ENCODE measurements at regions of chr13 and their contacts with region 1.

Region 1: GRCh38 chr13:48126944-48127830 is 32.3 kb upstream of the MED4 start:
- DNase-seq: peak in 1 of 2 experiments; percentile 61
- H3K4me3 ChIP-seq: no peak overlapping the region
- H3K4me3 Mint-ChIP-seq: no peak overlapping the region
- H3K27ac Mint-ChIP-seq: no peak overlapping the region
- H3K4me1 ChIP-seq: peaks cover 6% of the 10 kb centered on the region; the same call in 1 of the 2 replicates
- H3K4me1 Mint-ChIP-seq: no peaks in the 10 kb centered on the region
- H3K27me3 ChIP-seq: no peaks in the 10 kb centered on the region
- H3K27me3 Mint-ChIP-seq: no peaks in the 10 kb centered on the region
- CTCF ChIP-seq: peak; percentile 56 to 67

Region 2: DNA sequence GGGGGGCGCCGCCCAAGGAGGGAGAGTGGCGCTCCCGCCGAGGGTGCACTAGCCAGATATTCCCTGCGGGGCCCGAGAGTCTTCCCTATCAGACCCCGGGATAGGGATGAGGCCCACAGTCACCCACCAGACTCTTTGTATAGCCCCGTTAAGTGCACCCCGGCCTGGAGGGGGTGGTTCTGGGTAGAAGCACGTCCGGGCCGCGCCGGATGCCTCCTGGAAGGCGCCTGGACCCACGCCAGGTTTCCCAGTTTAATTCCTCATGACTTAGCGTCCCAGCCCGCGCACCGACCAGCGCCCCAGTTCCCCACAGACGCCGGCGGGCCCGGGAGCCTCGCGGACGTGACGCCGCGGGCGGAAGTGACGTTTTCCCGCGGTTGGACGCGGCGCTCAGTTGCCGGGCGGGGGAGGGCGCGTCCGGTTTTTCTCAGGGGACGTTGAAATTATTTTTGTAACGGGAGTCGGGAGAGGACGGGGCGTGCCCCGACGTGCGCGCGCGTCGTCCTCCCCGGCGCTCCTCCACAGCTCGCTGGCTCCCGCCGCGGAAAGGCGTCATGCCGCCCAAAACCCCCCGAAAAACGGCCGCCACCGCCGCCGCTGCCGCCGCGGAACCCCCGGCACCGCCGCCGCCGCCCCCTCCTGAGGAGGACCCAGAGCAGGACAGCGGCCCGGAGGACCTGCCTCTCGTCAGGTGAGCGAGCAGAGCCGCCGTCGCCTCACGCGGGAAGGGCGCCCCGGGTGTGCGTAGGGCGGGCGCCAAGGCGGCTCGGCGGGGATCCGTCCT is 176.4 kb after region 1 on chr13 and contains the start of gene RB1:
- CTCF ChIA-PET with region 1: no interaction called
- POLR2A ChIA-PET with region 1: no interaction called
- intact Hi-C with region 1: loop called (anchors 2 kb)
- DNase-seq: peak; percentile 81 to 88
- H3K4me3 ChIP-seq: peak within 1 kb of the TSS; percentile 76
- H3K4me3 Mint-ChIP-seq: peak within 1 kb of the TSS; percentile 82
- H3K27ac Mint-ChIP-seq: peak within 1 kb of the TSS; percentile 93
- H3K4me1 ChIP-seq: peaks cover 4% of the 10 kb centered on the region; the same call in 1 of the 2 replicates
- H3K4me1 Mint-ChIP-seq: peaks cover 6% of the 10 kb centered on the region
- H3K27me3 ChIP-seq: no peaks in the 10 kb centered on the region
- H3K27me3 Mint-ChIP-seq: no peaks in the 10 kb centered on the region
- CTCF ChIP-seq: no peak
- total RNA-seq, gene RB1: 24.1 and 24.3 TPM in 2 replicates